Activated naive CD4-positive, alpha-beta T cell treated with anti-CD3 and anti-CD28 coated beads for 36 hours (primary cell): ENCODE measurements at regions of chrX and their contacts with region 1.

Region 1: DNA sequence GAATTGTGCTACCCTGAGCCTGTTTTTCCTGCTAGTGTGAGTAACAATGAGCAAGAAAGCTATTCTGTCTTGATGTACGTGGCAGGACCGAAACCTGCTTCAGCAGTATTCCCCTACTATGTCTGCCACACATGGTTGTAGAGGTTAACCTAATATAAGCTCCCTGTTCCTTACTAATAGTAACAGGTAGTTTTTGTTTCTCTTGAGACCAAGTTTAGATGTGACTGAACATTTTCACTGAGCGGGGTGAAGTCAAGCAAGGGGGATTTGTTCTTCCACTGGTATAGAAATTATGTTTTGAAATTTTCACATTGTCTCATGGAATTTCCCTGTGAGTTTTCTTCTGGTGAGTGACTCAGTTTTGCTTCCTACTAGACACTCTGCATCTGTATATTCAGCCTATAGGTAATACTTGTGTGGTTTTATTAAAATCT is 37.3 kb downstream of the RRAGB start:
- DNase-seq: peak; percentile 25
- H3K4me3 Mint-ChIP-seq: no peak overlapping the region
- H3K27ac Mint-ChIP-seq: no peak overlapping the region
- H3K4me1 Mint-ChIP-seq: peaks cover 7% of the 10 kb centered on the region
- H3K27me3 Mint-ChIP-seq: no peaks in the 10 kb centered on the region

Region 2: GRCh38 chrX:55025870-55026542 is 728.9 kb before region 1 on chrX:
- CTCF ChIA-PET with region 1: no interaction called
- intact Hi-C with region 1: no loop called
- DNase-seq: no peak
- H3K4me3 Mint-ChIP-seq: no peak overlapping the region
- H3K27ac Mint-ChIP-seq: no peak overlapping the region
- H3K4me1 Mint-ChIP-seq: peaks cover 5% of the 10 kb centered on the region
- H3K27me3 Mint-ChIP-seq: no peaks in the 10 kb centered on the region

Region 3: DNA sequence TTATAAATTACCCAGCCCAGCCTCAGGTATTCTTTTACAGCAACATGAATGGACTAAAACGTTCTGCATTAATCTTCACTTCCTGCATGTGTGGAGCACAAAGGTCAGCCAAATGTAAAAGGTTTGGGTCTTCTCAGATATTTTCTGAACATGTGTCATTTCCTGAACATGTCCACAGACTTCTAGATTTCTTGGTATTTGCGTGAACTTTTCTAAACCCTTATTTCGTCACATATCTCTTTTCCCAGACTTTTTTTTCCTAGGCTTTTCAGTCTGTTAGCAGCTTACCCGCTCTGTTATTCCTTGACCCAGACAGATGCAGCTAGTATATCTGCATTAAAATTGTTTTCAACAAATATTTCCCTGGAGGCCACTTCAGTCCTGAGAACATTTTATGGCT is 207.9 kb before region 1 on chrX:
- CTCF ChIA-PET with region 1: no interaction called
- intact Hi-C with region 1: no loop called
- DNase-seq: no peak
- H3K4me3 Mint-ChIP-seq: no peak overlapping the region
- H3K27ac Mint-ChIP-seq: no peak overlapping the region
- H3K4me1 Mint-ChIP-seq: no peaks in the 10 kb centered on the region
- H3K27me3 Mint-ChIP-seq: no peaks in the 10 kb centered on the region

Region 4: DNA sequence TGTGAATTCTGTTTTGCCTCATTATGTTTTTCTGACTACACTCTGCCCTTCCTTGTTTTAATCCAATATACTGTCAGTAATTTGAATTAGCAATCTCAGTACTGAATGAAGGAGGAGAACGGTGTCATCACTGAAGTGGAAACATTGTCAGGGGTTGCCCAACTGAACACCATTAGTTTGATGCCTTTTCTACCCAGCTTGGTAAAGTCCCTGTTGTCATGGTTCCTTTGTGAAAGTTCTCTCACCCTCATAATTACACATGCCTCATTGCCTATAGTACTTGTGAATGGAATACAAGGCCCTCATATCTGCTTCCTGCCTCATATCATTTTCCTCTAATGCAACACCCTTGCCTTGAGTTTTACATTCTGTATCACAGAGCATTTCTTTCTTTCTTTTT is 39.5 kb after region 1 on chrX:
- CTCF ChIA-PET with region 1: no interaction called
- intact Hi-C with region 1: loop called (anchors 1 kb)
- DNase-seq: peak; percentile 52
- H3K4me3 Mint-ChIP-seq: no peak overlapping the region
- H3K27ac Mint-ChIP-seq: no peak overlapping the region
- H3K4me1 Mint-ChIP-seq: peaks cover 4% of the 10 kb centered on the region
- H3K27me3 Mint-ChIP-seq: no peaks in the 10 kb centered on the region

Region 5: GRCh38 chrX:55907968-55908607 is 153.2 kb after region 1 on chrX:
- CTCF ChIA-PET with region 1: no interaction called
- intact Hi-C with region 1: no loop called
- DNase-seq: peak; percentile 67
- H3K4me3 Mint-ChIP-seq: peak overlapping the region; percentile 75
- H3K27ac Mint-ChIP-seq: peak overlapping the region; percentile 57
- H3K4me1 Mint-ChIP-seq: peaks cover 7% of the 10 kb centered on the region
- H3K27me3 Mint-ChIP-seq: no peaks in the 10 kb centered on the region